MCF 10A (cell line): ENCODE measurements at regions of chr1 and their contacts with region 1.

Region 1: GRCh38 chr1:226487921-226488546 is 60.5 kb upstream of the STUM start:
- DNase-seq: peak; percentile 75
- H3K4me3 Mint-ChIP-seq: no peak overlapping the region
- H3K27ac Mint-ChIP-seq: peak overlapping the region; percentile 44
- H3K4me1 Mint-ChIP-seq: peaks cover 13% of the 10 kb centered on the region
- H3K27me3 Mint-ChIP-seq: no peaks in the 10 kb centered on the region
- CTCF ChIP-seq: peak; percentile 27

Region 2: DNA sequence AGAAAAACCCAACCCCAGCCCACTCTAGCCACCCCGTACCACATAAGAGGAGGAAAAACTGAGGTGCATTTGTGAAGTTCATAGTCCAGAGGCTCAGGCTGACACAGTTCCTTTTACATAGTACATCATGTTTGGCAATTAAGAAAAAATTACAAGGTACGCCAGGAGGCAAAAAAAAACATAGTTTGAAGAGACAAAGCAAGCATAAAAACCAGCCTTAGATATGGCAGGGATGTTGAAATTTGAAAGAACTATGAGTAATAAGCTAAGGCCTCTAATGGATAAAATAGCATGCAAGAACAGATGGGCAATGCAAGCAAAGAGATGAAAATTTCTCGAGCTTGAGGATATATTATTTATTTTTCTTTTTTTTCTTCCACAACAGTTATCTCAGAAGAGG is 232.7 kb before region 1 on chr1:
- CTCF ChIA-PET with region 1: no interaction called
- POLR2A ChIA-PET with region 1: no interaction called
- intact Hi-C with region 1: no loop called
- DNase-seq: peak; percentile 13
- H3K4me3 Mint-ChIP-seq: no peak overlapping the region
- H3K27ac Mint-ChIP-seq: peak overlapping the region; percentile 1
- H3K4me1 Mint-ChIP-seq: peaks cover 14% of the 10 kb centered on the region
- H3K27me3 Mint-ChIP-seq: no peaks in the 10 kb centered on the region
- CTCF ChIP-seq: no peak

Region 3: GRCh38 chr1:226506921-226507320 is 18.9 kb after region 1 on chr1:
- CTCF ChIA-PET with region 1: interaction called, 5 read pairs
- POLR2A ChIA-PET with region 1: interaction called, 4 read pairs
- intact Hi-C with region 1: loop called (anchors 2 kb)
- DNase-seq: no peak
- H3K4me3 Mint-ChIP-seq: no peak overlapping the region
- H3K27ac Mint-ChIP-seq: no peak overlapping the region
- H3K4me1 Mint-ChIP-seq: peaks cover 4% of the 10 kb centered on the region
- H3K27me3 Mint-ChIP-seq: peaks cover 74% of the 10 kb centered on the region
- CTCF ChIP-seq: no peak

Region 4: DNA sequence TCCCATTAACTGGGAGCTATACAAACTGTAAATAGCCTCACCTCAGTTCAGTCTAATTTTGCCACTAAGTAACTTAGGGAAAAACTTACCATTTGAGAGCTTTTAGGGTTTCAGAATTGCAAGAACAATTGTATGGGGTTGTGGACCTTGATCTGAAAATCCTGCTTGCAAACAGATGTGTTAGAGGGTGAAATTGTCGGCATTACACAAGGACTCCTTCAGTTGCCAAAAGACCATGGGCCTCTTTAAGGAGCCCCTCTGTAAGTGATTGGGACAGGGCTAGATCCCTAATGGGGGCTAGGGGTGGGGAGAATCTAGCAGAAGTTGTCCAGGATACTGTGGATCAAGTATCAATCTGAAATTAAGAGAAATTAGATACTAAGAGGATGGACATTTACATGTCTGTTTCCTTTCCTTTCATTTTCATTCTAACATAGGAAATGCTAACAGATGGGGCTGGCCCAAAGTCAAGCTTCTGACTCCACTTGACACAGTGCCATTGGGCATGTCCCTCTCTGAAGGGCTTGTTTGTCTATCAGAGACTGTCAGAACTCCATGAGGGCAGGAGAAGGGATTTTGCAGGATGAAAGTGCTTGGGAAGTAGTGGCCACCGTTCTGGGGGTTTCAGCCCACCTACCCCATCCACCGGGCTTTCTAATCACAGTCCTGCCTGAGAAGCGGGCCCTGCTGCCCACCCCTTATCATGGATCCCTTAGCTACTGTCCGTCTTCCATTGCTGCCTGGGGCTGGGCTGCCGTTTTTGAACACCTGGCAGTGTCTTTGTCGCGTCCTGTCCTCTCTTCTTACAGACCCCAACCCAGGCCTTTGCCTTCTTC is 115.2 kb after region 1 on chr1:
- CTCF ChIA-PET with region 1: no interaction called
- POLR2A ChIA-PET with region 1: no interaction called
- intact Hi-C with region 1: loop called (anchors 2 kb)
- DNase-seq: peak; percentile 91
- H3K4me3 Mint-ChIP-seq: peak overlapping the region; percentile 71
- H3K27ac Mint-ChIP-seq: peak overlapping the region; percentile 97
- H3K4me1 Mint-ChIP-seq: peaks cover 42% of the 10 kb centered on the region
- H3K27me3 Mint-ChIP-seq: peaks cover 8% of the 10 kb centered on the region
- CTCF ChIP-seq: no peak

Region 5: DNA sequence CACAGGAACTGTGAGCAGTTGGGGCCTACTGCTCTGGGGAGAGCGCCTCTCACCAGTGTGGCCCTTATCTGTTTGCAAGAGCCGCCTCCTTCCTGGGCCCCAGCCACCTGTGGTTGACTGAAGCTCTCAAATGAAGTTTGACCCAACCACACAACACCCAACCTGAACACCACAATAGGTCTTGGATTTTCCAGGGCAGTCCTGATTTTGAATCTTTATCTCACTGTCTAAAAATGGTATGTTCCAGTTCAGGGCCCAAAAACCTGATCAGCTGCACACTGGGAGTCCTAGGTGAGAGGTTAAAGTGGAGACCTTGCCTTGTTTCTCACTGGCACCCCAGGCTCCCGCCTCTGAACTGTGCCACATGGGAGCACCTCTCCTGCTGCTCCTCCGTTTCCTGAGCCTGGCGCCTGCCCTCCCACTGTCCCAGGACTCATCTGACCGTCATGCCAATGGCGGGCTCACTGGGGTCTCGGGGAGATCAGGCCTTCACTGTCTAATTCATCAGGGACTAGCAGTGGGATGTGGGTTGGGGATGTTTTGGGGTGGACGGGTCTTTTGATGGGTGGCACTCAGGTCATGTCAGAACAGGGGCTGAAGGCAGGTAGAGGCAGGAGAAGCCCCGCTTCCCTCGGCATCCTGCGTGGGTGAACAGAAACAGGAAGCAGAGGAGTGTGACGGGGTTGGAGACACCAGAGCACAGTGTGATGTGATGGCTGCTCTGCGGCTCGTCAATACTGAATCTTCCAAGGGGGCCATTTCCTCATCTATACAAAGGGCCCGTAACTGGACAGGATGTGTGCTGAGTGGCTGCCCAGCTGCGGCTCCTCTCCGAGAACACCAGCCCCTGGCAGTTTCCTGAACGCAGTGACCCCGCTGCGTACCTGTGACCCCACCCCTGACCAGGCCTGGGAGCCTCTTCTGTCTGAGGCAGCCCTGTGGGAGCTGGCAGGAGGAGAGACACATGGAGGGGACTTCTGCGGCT is 310.7 kb after region 1 on chr1:
- CTCF ChIA-PET with region 1: no interaction called
- POLR2A ChIA-PET with region 1: no interaction called
- intact Hi-C with region 1: no loop called
- DNase-seq: no peak
- H3K4me3 Mint-ChIP-seq: no peak overlapping the region
- H3K27ac Mint-ChIP-seq: peak overlapping the region; percentile 32
- H3K4me1 Mint-ChIP-seq: no peaks in the 10 kb centered on the region
- H3K27me3 Mint-ChIP-seq: peaks cover 8% of the 10 kb centered on the region
- CTCF ChIP-seq: no peak